B cell (primary cell): ENCODE measurements at regions of chr6 and their contacts with region 1.

Region 1: DNA sequence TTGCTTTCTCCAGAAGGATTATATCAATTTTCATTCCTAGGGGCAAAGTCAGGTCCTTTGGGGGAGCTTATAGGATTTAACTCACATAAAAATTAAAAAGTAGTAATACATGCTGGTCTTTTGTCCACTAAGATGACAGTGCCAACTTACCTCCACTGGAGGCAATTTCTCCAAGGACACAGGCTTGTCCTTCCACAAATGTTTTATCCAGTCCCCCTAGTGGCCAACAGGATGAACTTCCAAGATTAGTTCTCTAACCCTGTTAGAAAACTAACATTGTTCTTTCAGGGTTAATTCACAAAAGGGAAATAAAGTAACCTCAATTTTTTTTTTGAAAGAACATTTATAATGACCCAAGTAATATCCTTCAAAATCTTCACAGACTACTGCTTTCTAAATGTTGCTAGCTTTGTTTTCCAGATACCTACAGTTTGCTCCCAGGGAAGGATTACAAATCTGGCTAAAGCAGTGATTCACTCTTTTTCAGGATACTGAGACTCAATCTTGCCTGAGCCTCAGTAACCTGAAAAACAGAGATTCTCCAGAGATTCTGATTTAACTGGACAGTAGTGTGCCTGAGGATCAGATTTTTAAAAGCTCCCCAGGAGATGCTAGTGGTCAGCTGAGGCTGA is 31.7 kb upstream of the UBR2 start:
- DNase-seq: peak; percentile 51
- ATAC-seq: peak; percentile 54
- H3K4me3 ChIP-seq: no peak overlapping the region
- H3K4me3 Mint-ChIP-seq: no peak overlapping the region
- H3K27ac ChIP-seq: no peak overlapping the region
- H3K27ac Mint-ChIP-seq: no peak overlapping the region
- H3K4me1 ChIP-seq: no peaks in the 10 kb centered on the region
- H3K4me1 Mint-ChIP-seq: no peaks in the 10 kb centered on the region
- H3K27me3 ChIP-seq: no peaks in the 10 kb centered on the region
- H3K27me3 Mint-ChIP-seq: no peaks in the 10 kb centered on the region
- CTCF ChIP-seq: peak; percentile 92

Region 2: DNA sequence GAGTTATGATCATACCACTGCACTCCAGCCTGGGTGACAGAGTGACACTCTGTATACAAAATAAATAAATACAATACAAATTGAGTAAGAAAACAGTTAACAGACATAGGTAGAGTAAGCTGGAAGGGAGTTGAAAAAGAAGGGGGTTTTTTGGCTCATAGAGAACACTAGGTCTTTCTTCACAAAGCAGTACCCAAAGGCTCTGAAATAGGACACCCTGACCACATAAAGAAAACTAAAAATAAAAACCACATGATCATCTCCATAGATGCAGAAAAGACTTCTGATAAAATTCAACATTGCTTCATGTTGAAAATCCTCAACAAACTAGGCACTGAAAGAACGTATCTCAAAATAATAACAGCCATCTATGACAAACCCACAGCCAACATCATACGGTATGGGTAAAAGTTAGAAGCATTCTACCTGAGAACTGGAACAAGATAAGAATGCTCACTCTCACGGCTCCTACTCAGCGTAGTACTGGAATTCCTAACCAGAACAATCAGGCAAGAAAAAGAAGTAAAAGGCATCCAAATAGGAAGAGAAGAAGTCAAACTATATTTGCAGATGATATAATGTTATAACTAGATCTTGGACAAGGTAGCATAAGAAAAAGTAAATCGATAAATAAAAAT is 696.0 kb before region 1 on chr6:
- CTCF ChIA-PET with region 1: no interaction called
- POLR2A ChIA-PET with region 1: no interaction called
- intact Hi-C with region 1: no loop called
- DNase-seq: no peak
- ATAC-seq: no peak
- H3K4me3 ChIP-seq: no peak overlapping the region
- H3K4me3 Mint-ChIP-seq: no peak overlapping the region
- H3K27ac ChIP-seq: no peak overlapping the region
- H3K27ac Mint-ChIP-seq: no peak overlapping the region
- H3K4me1 ChIP-seq: no peaks in the 10 kb centered on the region
- H3K4me1 Mint-ChIP-seq: no peaks in the 10 kb centered on the region
- H3K27me3 ChIP-seq: no peaks in the 10 kb centered on the region
- H3K27me3 Mint-ChIP-seq: no peaks in the 10 kb centered on the region
- CTCF ChIP-seq: no peak

Region 3: GRCh38 chr6:42511803-42512422 is 20.2 kb before region 1 on chr6:
- CTCF ChIA-PET with region 1: interaction called, 12 read pairs
- POLR2A ChIA-PET with region 1: no interaction called
- intact Hi-C with region 1: no loop called
- DNase-seq: no peak
- ATAC-seq: no peak
- H3K4me3 ChIP-seq: no peak overlapping the region
- H3K4me3 Mint-ChIP-seq: no peak overlapping the region
- H3K27ac ChIP-seq: no peak overlapping the region
- H3K27ac Mint-ChIP-seq: no peak overlapping the region
- H3K4me1 ChIP-seq: peaks cover 3 to 10% of the 10 kb centered on the region in 2 donors
- H3K4me1 Mint-ChIP-seq: peaks cover 16% of the 10 kb centered on the region
- H3K27me3 ChIP-seq: no peaks in the 10 kb centered on the region
- H3K27me3 Mint-ChIP-seq: no peaks in the 10 kb centered on the region
- CTCF ChIP-seq: no peak

Region 4: GRCh38 chr6:42520786-42521607 is 11.2 kb before region 1 on chr6:
- CTCF ChIA-PET with region 1: interaction called, 11 read pairs
- POLR2A ChIA-PET with region 1: no interaction called
- intact Hi-C with region 1: no loop called
- DNase-seq: peak; percentile 33
- ATAC-seq: peak; percentile 79
- H3K4me3 ChIP-seq: peak overlapping the region in 1 of 5 experiments; percentile 24
- H3K4me3 Mint-ChIP-seq: peak overlapping the region; percentile 50
- H3K27ac ChIP-seq: no peak overlapping the region
- H3K27ac Mint-ChIP-seq: peak overlapping the region; percentile 90
- H3K4me1 ChIP-seq: peaks cover 6 to 15% of the 10 kb centered on the region in 2 donors
- H3K4me1 Mint-ChIP-seq: peaks cover 17% of the 10 kb centered on the region
- H3K27me3 ChIP-seq: no peaks in the 10 kb centered on the region
- H3K27me3 Mint-ChIP-seq: no peaks in the 10 kb centered on the region
- CTCF ChIP-seq: no peak